Activated CD8-positive, alpha-beta T cell treated with anti-CD3 and anti-CD28 coated beads for 36 hours (primary cell): ENCODE measurements at regions of chr10 and their contacts with region 1.

Region 1: GRCh38 chr10:60827791-60828488 is 49.7 kb downstream of the CDK1 start:
- DNase-seq: no peak
- ATAC-seq: peak; percentile 30
- H3K4me3 Mint-ChIP-seq: no peak overlapping the region
- H3K27ac Mint-ChIP-seq: no peak overlapping the region
- H3K4me1 Mint-ChIP-seq: peaks cover 11% of the 10 kb centered on the region
- H3K27me3 Mint-ChIP-seq: peaks cover 5% of the 10 kb centered on the region
- CTCF ChIP-seq: no peak

Region 2: DNA sequence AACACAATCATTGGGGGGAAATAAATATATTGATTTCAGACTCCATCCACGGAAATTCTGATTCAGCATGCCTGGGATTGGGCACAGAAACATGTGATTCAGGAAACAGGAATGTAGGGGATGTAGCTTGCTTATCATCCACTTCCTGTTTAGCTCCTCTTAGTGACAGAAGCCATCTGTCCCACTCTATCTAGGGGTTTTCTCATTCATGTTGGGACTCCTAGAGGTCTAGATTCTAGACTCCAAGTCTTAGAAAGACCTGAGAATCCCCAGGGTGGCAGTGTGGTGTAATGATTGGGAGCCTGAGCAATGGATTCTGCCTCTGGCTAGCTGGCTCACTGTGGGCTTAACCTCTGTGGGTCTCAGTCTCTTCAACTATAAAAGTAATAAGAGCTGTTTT is 18.2 kb after region 1 on chr10:
- CTCF ChIA-PET with region 1: no interaction called
- POLR2A ChIA-PET with region 1: no interaction called
- intact Hi-C with region 1: loop called (anchors 1 kb)
- DNase-seq: no peak
- ATAC-seq: no peak
- H3K4me3 Mint-ChIP-seq: no peak overlapping the region
- H3K27ac Mint-ChIP-seq: no peak overlapping the region
- H3K4me1 Mint-ChIP-seq: no peaks in the 10 kb centered on the region
- H3K27me3 Mint-ChIP-seq: no peaks in the 10 kb centered on the region
- CTCF ChIP-seq: no peak